ENCODE measurements at regions of chr17 and their contacts with region 1.

Region 1: GRCh38 chr17:7982666-7983065 is 19.7 kb upstream of the GUCY2D start:
- DNase-seq: no peak
- ATAC-seq: peak in 1 of 2 experiments; percentile 60; a peak in 2 of 6 replicates
- H3K4me3 ChIP-seq: no peak overlapping the region
- H3K27ac ChIP-seq: no peak overlapping the region
- H3K4me1 ChIP-seq: no peaks in the 10 kb centered on the region
- CTCF ChIP-seq: no peak; the same call in 2 of the 3 replicates
- EP300 ChIP-seq: no peak
- POLR2A ChIP-seq: no peak
- RAD21 ChIP-seq: peak in 1 of 2 experiments; percentile 33; a peak in 2 of 5 replicates

Region 2: DNA sequence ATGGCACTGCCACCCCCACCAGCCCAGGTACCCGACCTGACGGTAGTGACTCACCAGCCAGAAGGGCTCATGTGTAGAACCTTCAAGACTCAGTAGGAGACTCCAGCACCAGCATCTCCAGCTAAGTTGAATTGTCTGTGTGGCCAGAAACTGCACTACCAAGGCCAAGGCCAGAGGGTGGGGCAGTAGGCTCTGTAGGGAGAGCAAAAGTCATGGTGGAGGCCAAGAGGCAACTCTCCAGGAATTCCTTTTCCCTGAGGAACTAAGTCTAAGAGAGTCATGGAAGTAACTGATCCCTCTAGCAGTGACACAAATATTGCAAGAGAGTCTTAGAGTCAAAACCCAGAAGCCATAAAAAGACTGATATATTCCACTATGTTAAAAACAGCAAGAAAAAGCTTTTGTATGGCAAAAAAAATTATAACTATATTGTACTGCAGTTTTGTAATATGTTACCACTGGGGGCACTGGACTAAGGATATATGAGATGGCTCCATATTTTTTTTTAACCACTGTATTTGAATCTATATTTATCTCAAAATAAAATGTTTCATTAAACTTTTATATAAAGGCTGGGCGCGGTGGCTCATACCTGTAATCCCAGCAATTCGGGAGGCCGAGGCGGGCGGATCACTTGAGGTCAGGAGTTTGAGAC is 10.4 kb before region 1 on chr17:
- CTCF ChIA-PET with region 1: interaction called, 470 read pairs
- POLR2A ChIA-PET with region 1: no interaction called
- DNase-seq: no peak
- ATAC-seq: peak; percentile 54 to 67; a peak in 3 of 6 replicates
- H3K4me3 ChIP-seq: no peak overlapping the region
- H3K27ac ChIP-seq: no peak overlapping the region
- H3K4me1 ChIP-seq: no peaks in the 10 kb centered on the region
- CTCF ChIP-seq: peak; percentile 28; the same call in 2 of the 3 replicates
- EP300 ChIP-seq: no peak
- POLR2A ChIP-seq: no peak
- RAD21 ChIP-seq: no peak

Region 3: GRCh38 chr17:7997186-7997585 is 14.5 kb after region 1 on chr17:
- CTCF ChIA-PET with region 1: interaction called, 95 read pairs
- POLR2A ChIA-PET with region 1: no interaction called
- DNase-seq: peak; percentile 67 to 68
- ATAC-seq: peak; percentile 94 to 95
- H3K4me3 ChIP-seq: no peak overlapping the region
- H3K27ac ChIP-seq: no peak overlapping the region
- H3K4me1 ChIP-seq: no peaks in the 10 kb centered on the region
- CTCF ChIP-seq: peak; percentile 70
- EP300 ChIP-seq: no peak
- POLR2A ChIP-seq: no peak
- RAD21 ChIP-seq: peak; percentile 40 to 44; a peak in 3 of 5 replicates